ENCODE measurements at regions of chr2 and their contacts with region 1.

Region 1: GRCh38 chr2:201768918-201769317 is 11.8 kb downstream of the ALS2 start:
- DNase-seq: no peak
- H3K4me3 ChIP-seq: no peak overlapping the region
- H3K27ac ChIP-seq: no peak overlapping the region
- H3K4me1 ChIP-seq: no peaks in the 10 kb centered on the region
- CTCF ChIP-seq: no peak

Region 2: GRCh38 chr2:201542291-201542690 is 226.6 kb before region 1 on chr2:
- CTCF ChIA-PET with region 1: no interaction called
- POLR2A ChIA-PET with region 1: no interaction called
- intact Hi-C with region 1: no loop called
- DNase-seq: no peak
- H3K4me3 ChIP-seq: no peak overlapping the region
- H3K27ac ChIP-seq: no peak overlapping the region
- H3K4me1 ChIP-seq: no peaks in the 10 kb centered on the region
- CTCF ChIP-seq: no peak

Region 3: GRCh38 chr2:201618744-201619662 is 149.9 kb before region 1 on chr2:
- CTCF ChIA-PET with region 1: no interaction called
- POLR2A ChIA-PET with region 1: no interaction called
- intact Hi-C with region 1: no loop called
- DNase-seq: no peak
- H3K4me3 ChIP-seq: no peak overlapping the region
- H3K27ac ChIP-seq: no peak overlapping the region
- H3K4me1 ChIP-seq: no peaks in the 10 kb centered on the region
- CTCF ChIP-seq: no peak

Region 4: GRCh38 chr2:201746551-201746950 is 22.4 kb before region 1 on chr2:
- CTCF ChIA-PET with region 1: no interaction called
- POLR2A ChIA-PET with region 1: interaction called, 3 read pairs
- intact Hi-C with region 1: loop called (anchors 1 kb)
- DNase-seq: no peak
- H3K4me3 ChIP-seq: no peak overlapping the region
- H3K27ac ChIP-seq: no peak overlapping the region
- H3K4me1 ChIP-seq: no peaks in the 10 kb centered on the region
- CTCF ChIP-seq: no peak

Region 5: GRCh38 chr2:201780674-201781581 is 12.0 kb after region 1 on chr2 and contains the start of gene ALS2:
- CTCF ChIA-PET with region 1: interaction called, 3 read pairs
- POLR2A ChIA-PET with region 1: interaction called, 11 read pairs
- intact Hi-C with region 1: no loop called
- DNase-seq: peak; percentile 94
- H3K4me3 ChIP-seq: peak within 1 kb of the TSS; percentile 84
- H3K27ac ChIP-seq: peak within 1 kb of the TSS; percentile 47
- H3K4me1 ChIP-seq: peaks cover 22% of the 10 kb centered on the region
- CTCF ChIP-seq: no peak
- total RNA-seq, gene ALS2: 8.3 and 9.6 TPM in 2 replicates

Region 6: GRCh38 chr2:201793631-201794030 is 24.7 kb after region 1 on chr2:
- CTCF ChIA-PET with region 1: no interaction called
- POLR2A ChIA-PET with region 1: no interaction called
- intact Hi-C with region 1: no loop called
- DNase-seq: no peak
- H3K4me3 ChIP-seq: no peak overlapping the region
- H3K27ac ChIP-seq: no peak overlapping the region
- H3K4me1 ChIP-seq: peaks cover 7% of the 10 kb centered on the region
- CTCF ChIP-seq: no peak

Region 7: GRCh38 chr2:201971531-201972228 is 202.8 kb after region 1 on chr2:
- CTCF ChIA-PET with region 1: no interaction called
- POLR2A ChIA-PET with region 1: no interaction called
- intact Hi-C with region 1: no loop called
- DNase-seq: no peak
- H3K4me3 ChIP-seq: no peak overlapping the region
- H3K27ac ChIP-seq: no peak overlapping the region
- H3K4me1 ChIP-seq: no peaks in the 10 kb centered on the region
- CTCF ChIP-seq: no peak

Measured in OCI-LY7 (cell line).